Naive thymus-derived CD4-positive, alpha-beta T cell (primary cell): ENCODE measurements at regions of chr5 and their contacts with region 1.

Region 1: GRCh38 chr5:40410231-40410861 is 269.4 kb upstream of the PTGER4 start:
- DNase-seq: peak; percentile 23 to 98 (median 93)
- ATAC-seq: peak; percentile 91
- H3K4me3 ChIP-seq: no peak overlapping the region
- H3K4me3 Mint-ChIP-seq: peak overlapping the region; percentile 49 to 87 (median 80)
- H3K27ac ChIP-seq: peak overlapping the region; percentile 99
- H3K27ac Mint-ChIP-seq: peak overlapping the region; percentile 95 to 100 (median 99)
- H3K4me1 ChIP-seq: peaks cover 54 to 56% of the 10 kb centered on the region in 2 donors
- H3K4me1 Mint-ChIP-seq: peaks cover 38 to 76% (median 65%) of the 10 kb centered on the region in 7 donors
- H3K27me3 ChIP-seq: no peaks in the 10 kb centered on the region
- H3K27me3 Mint-ChIP-seq: no peaks in the 10 kb centered on the region

Region 2: GRCh38 chr5:40367255-40367654 is 43.1 kb before region 1 on chr5:
- CTCF ChIA-PET with region 1: no interaction called
- POLR2A ChIA-PET with region 1: no interaction called
- intact Hi-C with region 1: loop called in 1 of 2 experiments (anchors 1 kb)
- DNase-seq: peak in 7 of 9 donors; percentile 18 to 53 (median 38)
- ATAC-seq: peak; percentile 54
- H3K4me3 ChIP-seq: no peak overlapping the region
- H3K4me3 Mint-ChIP-seq: no peak overlapping the region
- H3K27ac ChIP-seq: no peak overlapping the region
- H3K27ac Mint-ChIP-seq: peak overlapping the region in 6 of 9 donors; percentile 19 to 86 (median 66)
- H3K4me1 ChIP-seq: peaks cover 0 to under 1% of the 10 kb centered on the region in 2 donors
- H3K4me1 Mint-ChIP-seq: peaks cover 0 to 17% (median 8%) of the 10 kb centered on the region in 7 donors
- H3K27me3 ChIP-seq: no peaks in the 10 kb centered on the region
- H3K27me3 Mint-ChIP-seq: no peaks in the 10 kb centered on the region

Region 3: GRCh38 chr5:40391642-40392041 is 18.7 kb before region 1 on chr5:
- CTCF ChIA-PET with region 1: no interaction called
- POLR2A ChIA-PET with region 1: interaction called, 33 read pairs
- intact Hi-C with region 1: no loop called
- DNase-seq: no peak
- ATAC-seq: peak; percentile 69
- H3K4me3 ChIP-seq: no peak overlapping the region
- H3K4me3 Mint-ChIP-seq: no peak overlapping the region
- H3K27ac ChIP-seq: no peak overlapping the region
- H3K27ac Mint-ChIP-seq: peak overlapping the region in 1 of 9 donors; percentile 37
- H3K4me1 ChIP-seq: peaks cover 0 to 35% of the 10 kb centered on the region in 2 donors
- H3K4me1 Mint-ChIP-seq: peaks cover 23 to 41% (median 25%) of the 10 kb centered on the region in 7 donors
- H3K27me3 ChIP-seq: no peaks in the 10 kb centered on the region
- H3K27me3 Mint-ChIP-seq: no peaks in the 10 kb centered on the region

Region 4: GRCh38 chr5:40437452-40437861 is 27.1 kb after region 1 on chr5:
- CTCF ChIA-PET with region 1: interaction called, 4 read pairs
- POLR2A ChIA-PET with region 1: interaction called, 28 read pairs
- intact Hi-C with region 1: loop called (anchors 1 kb)
- DNase-seq: peak in 1 of 9 donors; percentile 7
- ATAC-seq: peak; percentile 67
- H3K4me3 ChIP-seq: peak overlapping the region; percentile 24
- H3K4me3 Mint-ChIP-seq: peak overlapping the region in 6 of 10 donors; percentile 10 to 75 (median 38)
- H3K27ac ChIP-seq: peak overlapping the region; percentile 79
- H3K27ac Mint-ChIP-seq: peak overlapping the region; percentile 71 to 96 (median 91)
- H3K4me1 ChIP-seq: peaks cover 34 to 39% of the 10 kb centered on the region in 2 donors
- H3K4me1 Mint-ChIP-seq: peaks cover 23 to 82% (median 68%) of the 10 kb centered on the region in 7 donors
- H3K27me3 ChIP-seq: no peaks in the 10 kb centered on the region
- H3K27me3 Mint-ChIP-seq: no peaks in the 10 kb centered on the region

Region 5: GRCh38 chr5:40502736-40503135 is 92.4 kb after region 1 on chr5:
- CTCF ChIA-PET with region 1: no interaction called
- POLR2A ChIA-PET with region 1: no interaction called
- intact Hi-C with region 1: loop called in 1 of 2 experiments (anchors 2 kb)
- DNase-seq: no peak
- ATAC-seq: no peak
- H3K4me3 ChIP-seq: no peak overlapping the region
- H3K4me3 Mint-ChIP-seq: no peak overlapping the region
- H3K27ac ChIP-seq: no peak overlapping the region
- H3K27ac Mint-ChIP-seq: no peak overlapping the region
- H3K4me1 ChIP-seq: no peaks in the 10 kb centered on the region
- H3K4me1 Mint-ChIP-seq: peaks cover 5 to 14% (median 6%) of the 10 kb centered on the region in 7 donors
- H3K27me3 ChIP-seq: no peaks in the 10 kb centered on the region
- H3K27me3 Mint-ChIP-seq: no peaks in the 10 kb centered on the region

Region 6: GRCh38 chr5:40623480-40624420 is 213.4 kb after region 1 on chr5:
- CTCF ChIA-PET with region 1: no interaction called
- POLR2A ChIA-PET with region 1: no interaction called
- intact Hi-C with region 1: loop called in 1 of 2 experiments (anchors 1 kb)
- DNase-seq: peak in 7 of 9 donors; percentile 49 to 78 (median 68)
- ATAC-seq: peak; percentile 90
- H3K4me3 ChIP-seq: no peak overlapping the region
- H3K4me3 Mint-ChIP-seq: peak overlapping the region; percentile 13 to 73 (median 46)
- H3K27ac ChIP-seq: peak overlapping the region; percentile 50
- H3K27ac Mint-ChIP-seq: peak overlapping the region; percentile 60 to 94 (median 83)
- H3K4me1 ChIP-seq: peaks cover 23 to 25% of the 10 kb centered on the region in 2 donors
- H3K4me1 Mint-ChIP-seq: peaks cover 23 to 68% (median 55%) of the 10 kb centered on the region in 7 donors
- H3K27me3 ChIP-seq: no peaks in the 10 kb centered on the region
- H3K27me3 Mint-ChIP-seq: no peaks in the 10 kb centered on the region

Region 7: DNA sequence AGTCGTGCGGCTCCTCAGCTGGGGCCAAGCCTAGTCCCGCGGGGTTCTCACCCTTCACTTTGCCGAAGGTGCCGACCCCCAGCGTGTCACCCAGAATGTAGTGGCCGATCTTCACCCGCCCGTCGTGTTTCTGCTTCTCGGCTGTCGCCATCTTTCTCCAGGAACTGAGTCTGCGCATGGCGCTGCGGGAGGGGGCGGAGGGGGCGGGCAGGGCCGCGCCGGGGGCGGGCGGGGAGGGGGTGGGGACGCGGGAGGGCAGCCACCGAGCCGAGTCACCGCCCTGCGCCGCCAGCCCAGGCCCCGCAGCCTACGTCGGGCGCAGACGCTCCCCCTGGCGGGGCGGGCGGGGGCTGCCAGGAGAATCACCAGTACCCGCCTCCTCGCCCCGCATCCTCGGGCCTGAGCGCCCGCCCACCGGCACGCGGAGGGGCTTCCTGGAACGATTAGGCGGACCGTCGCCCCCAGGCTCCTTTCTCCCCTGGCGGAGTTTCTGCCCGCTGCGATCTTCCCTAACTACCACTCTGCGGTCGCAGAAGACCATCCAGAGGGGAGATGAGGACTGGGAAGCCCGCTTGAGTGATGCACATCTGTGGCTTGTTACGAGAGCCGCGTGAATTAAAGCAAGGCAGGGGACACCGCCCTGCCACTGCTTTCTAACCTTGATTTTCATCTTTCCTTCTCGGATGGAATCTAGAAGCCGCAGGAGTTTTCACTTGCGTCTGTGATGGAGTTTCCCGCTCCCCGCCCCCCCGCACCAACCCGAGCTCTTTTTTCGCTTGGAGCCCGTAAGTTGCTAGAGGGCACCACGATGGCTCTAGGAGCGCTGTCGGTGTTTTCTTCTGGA is 387.9 kb after region 1 on chr5 and contains the start of gene PRKAA1:
- CTCF ChIA-PET with region 1: no interaction called
- POLR2A ChIA-PET with region 1: no interaction called
- intact Hi-C with region 1: loop called in 1 of 2 experiments (anchors 2 kb)
- DNase-seq: peak; percentile 86 to 92 (median 91)
- ATAC-seq: peak; percentile 98
- H3K4me3 ChIP-seq: peak within 1 kb of the TSS; percentile 98
- H3K4me3 Mint-ChIP-seq: peak within 1 kb of the TSS; percentile 86 to 96 (median 94)
- H3K27ac ChIP-seq: peak within 1 kb of the TSS; percentile 91
- H3K27ac Mint-ChIP-seq: peak within 1 kb of the TSS; percentile 74 to 96 (median 94)
- H3K4me1 ChIP-seq: peaks cover 12 to 16% of the 10 kb centered on the region in 2 donors
- H3K4me1 Mint-ChIP-seq: peaks cover 28 to 55% (median 44%) of the 10 kb centered on the region in 7 donors
- H3K27me3 ChIP-seq: no peaks in the 10 kb centered on the region
- H3K27me3 Mint-ChIP-seq: peaks cover 0 to 17% (median 0%) of the 10 kb centered on the region in 5 donors
- total RNA-seq, gene PRKAA1: 65.5 to 103 (median 98.1) TPM